CD8-positive, alpha-beta T cell (primary cell): ENCODE measurements at regions of chr15 and their contacts with region 1.

Region 1: DNA sequence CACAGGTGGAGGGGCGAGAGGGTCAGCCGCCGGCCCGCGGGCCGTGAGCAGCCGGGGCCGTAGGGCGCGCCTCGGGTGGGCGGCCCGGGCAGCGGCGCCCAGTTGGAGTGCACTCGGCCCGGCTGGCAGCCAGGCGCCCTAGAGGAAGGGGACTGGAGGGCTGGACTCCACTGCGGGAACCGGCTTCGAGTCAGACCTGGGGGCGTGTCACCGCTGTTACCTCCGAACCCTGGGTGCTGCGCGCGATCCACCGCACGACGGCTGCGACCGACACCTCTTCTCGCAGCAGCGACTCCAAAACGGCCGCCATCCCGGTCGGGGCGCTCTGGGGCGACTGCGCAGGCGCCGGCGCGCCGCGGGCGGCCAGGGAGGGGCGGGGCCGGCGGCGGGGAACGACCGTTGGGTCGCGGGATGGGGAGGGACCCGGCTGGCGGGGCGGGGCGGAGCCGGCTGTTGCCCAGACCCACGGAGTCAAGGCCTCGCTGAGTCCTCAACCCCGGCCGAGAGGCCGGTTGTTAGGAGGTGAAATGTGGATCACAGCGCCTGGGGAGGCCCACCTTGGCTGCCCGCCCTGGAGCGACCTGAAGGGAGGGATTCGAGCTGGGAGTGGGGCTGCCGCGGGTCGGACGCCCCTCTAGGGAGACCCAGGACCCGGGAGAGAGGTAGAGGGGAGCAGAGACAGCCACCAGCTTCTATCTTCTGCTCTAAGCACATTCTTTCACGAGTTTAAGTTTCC is at the start of gene CDAN1:
- DNase-seq: peak; percentile 88 to 97 (median 93)
- ATAC-seq: peak; percentile 93
- H3K4me3 ChIP-seq: peak within 1 kb of the TSS; percentile 62 to 78
- H3K4me3 Mint-ChIP-seq: peak within 1 kb of the TSS; percentile 80
- H3K27ac ChIP-seq: peak within 1 kb of the TSS; percentile 72 to 80
- H3K27ac Mint-ChIP-seq: peak within 1 kb of the TSS; percentile 78
- H3K4me1 ChIP-seq: peaks cover 14% of the 10 kb centered on the region
- H3K4me1 Mint-ChIP-seq: peaks cover 22% of the 10 kb centered on the region
- H3K27me3 ChIP-seq: no peaks in the 10 kb centered on the region
- H3K27me3 Mint-ChIP-seq: no peaks in the 10 kb centered on the region
- CTCF ChIP-seq: no peak
- total RNA-seq, gene CDAN1: 23.9 to 24.0 TPM

Region 2: GRCh38 chr15:42207674-42208579 is 529.0 kb before region 1 on chr15 and contains the start of gene VPS39:
- CTCF ChIA-PET with region 1: no interaction called
- POLR2A ChIA-PET with region 1: no interaction called
- intact Hi-C with region 1: loop called in 1 of 2 experiments (anchors 10 kb)
- DNase-seq: peak; percentile 65 to 90 (median 85)
- ATAC-seq: peak; percentile 98
- H3K4me3 ChIP-seq: peak within 1 kb of the TSS; percentile 73 to 96
- H3K4me3 Mint-ChIP-seq: peak within 1 kb of the TSS; percentile 97
- H3K27ac ChIP-seq: peak within 1 kb of the TSS; percentile 83 to 84
- H3K27ac Mint-ChIP-seq: peak within 1 kb of the TSS; percentile 95
- H3K4me1 ChIP-seq: peaks cover 23% of the 10 kb centered on the region
- H3K4me1 Mint-ChIP-seq: peaks cover 40% of the 10 kb centered on the region
- H3K27me3 ChIP-seq: no peaks in the 10 kb centered on the region
- H3K27me3 Mint-ChIP-seq: no peaks in the 10 kb centered on the region
- CTCF ChIP-seq: no peak
- total RNA-seq, gene VPS39: 81.5 to 82.9 TPM